Spleen (tissue), 13 donors: ENCODE measurements at regions of chr10 and their contacts with region 1.

Region 1: GRCh38 chr10:71396084-71396720 is 518 bp upstream of the CDH23 start:
- DNase-seq: peak; percentile 83
- H3K4me3 ChIP-seq: peak overlapping the region; percentile 37 to 75 (median 48)
- H3K27ac ChIP-seq: peak overlapping the region in 1 of 8 donors; percentile 43
- H3K4me1 ChIP-seq: peaks cover 7 to 32% (median 18%) of the 10 kb centered on the region in 6 donors
- H3K27me3 ChIP-seq: peaks cover 3 to 88% (median 28%) of the 10 kb centered on the region in 7 donors
- CTCF ChIP-seq: peak in 10 of 11 experiments; percentile 26 to 77 (median 58)
- POLR2A ChIP-seq: no peak

Region 2: DNA sequence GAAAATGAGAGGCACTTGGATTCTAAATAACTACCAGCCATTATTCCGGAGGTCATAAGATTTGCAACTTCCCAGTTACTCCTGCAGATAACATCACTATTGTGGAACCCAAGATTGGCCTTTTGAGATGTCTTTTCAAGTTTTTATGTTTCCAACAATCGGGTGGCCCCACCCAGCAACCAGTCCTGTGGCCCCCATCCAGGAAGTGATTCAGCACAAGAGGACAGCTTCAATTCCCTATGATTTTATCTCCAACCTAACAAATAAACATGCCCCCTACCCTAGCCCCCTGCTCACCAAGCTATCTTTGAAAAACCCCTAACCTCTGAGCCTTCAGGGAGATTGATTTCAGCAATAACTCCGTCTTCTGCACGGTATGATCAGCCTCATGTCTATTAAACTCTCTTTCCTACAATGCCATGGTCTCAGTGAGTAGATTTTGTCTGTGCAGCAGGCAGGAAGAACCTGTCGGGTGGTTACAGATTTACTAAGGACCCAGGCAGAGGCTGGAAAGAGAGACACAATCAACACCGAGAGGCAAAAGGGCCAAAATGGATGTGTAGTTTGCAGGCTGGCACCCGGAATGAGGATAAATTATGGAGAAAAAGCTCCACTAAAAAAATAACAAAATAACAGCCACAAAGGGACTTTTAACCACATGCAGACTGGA is 267.8 kb before region 1 on chr10:
- intact Hi-C with region 1: no loop called
- DNase-seq: no peak
- H3K4me3 ChIP-seq: no peak overlapping the region
- H3K27ac ChIP-seq: no peak overlapping the region
- H3K4me1 ChIP-seq: peaks cover 0 to 28% (median 17%) of the 10 kb centered on the region in 6 donors
- H3K27me3 ChIP-seq: peaks cover 0 to 39% (median 0%) of the 10 kb centered on the region in 7 donors
- CTCF ChIP-seq: no peak
- POLR2A ChIP-seq: no peak

Region 3: GRCh38 chr10:71708301-71708703 is 312.1 kb after region 1 on chr10:
- intact Hi-C with region 1: loop called (anchors 10 kb)
- DNase-seq: peak; percentile 93
- H3K4me3 ChIP-seq: peak overlapping the region in 1 of 8 donors; percentile 0
- H3K27ac ChIP-seq: peak overlapping the region in 1 of 8 donors; percentile 27
- H3K4me1 ChIP-seq: peaks cover 20 to 57% (median 27%) of the 10 kb centered on the region in 6 donors
- H3K27me3 ChIP-seq: no peaks in the 10 kb centered on the region
- CTCF ChIP-seq: peak; percentile 83 to 95 (median 93)
- POLR2A ChIP-seq: no peak